ENCODE measurements at regions of chr21 and their contacts with region 1.

Region 1: DNA sequence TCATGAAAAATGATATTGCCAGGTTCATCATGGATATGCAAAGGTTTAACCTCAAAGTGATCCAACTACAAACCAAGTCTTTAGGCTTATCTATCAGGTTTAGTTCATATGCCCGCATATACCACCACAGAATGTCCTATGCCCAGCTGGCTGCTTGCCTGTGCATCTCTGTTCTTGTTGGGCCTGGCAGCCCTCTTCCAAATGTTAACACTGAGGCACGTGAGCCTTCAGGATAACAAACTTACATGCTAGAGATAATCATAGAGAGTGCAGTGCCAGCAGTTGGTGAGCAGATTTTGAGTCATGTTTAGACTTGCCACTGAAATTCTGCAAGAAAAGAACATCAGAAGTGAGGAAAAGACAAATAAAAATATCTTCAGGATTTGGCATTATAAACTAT is 607.9 kb upstream of the TMPRSS15 start:
- DNase-seq: peak in 2 of 5 donors; percentile 22 to 45
- ATAC-seq: peak; percentile 62 to 92 (median 81)
- H3K4me3 ChIP-seq: no peak overlapping the region
- H3K27ac ChIP-seq: peak overlapping the region in 2 of 12 donors; percentile 17 to 37
- H3K4me1 ChIP-seq: no peaks in the 10 kb centered on the region
- H3K27me3 ChIP-seq: no peaks in the 10 kb centered on the region
- CTCF ChIP-seq: no peak
- POLR2A ChIP-seq: no peak

Region 2: GRCh38 chr21:18970941-18971340 is 40.5 kb before region 1 on chr21:
- intact Hi-C with region 1: no loop called
- DNase-seq: no peak
- ATAC-seq: no peak
- H3K4me3 ChIP-seq: no peak overlapping the region
- H3K27ac ChIP-seq: no peak overlapping the region
- H3K4me1 ChIP-seq: no peaks in the 10 kb centered on the region
- H3K27me3 ChIP-seq: no peaks in the 10 kb centered on the region
- CTCF ChIP-seq: no peak
- POLR2A ChIP-seq: no peak

Region 3: GRCh38 chr21:18991846-18992245 is 19.6 kb before region 1 on chr21:
- intact Hi-C with region 1: no loop called
- DNase-seq: no peak
- ATAC-seq: no peak
- H3K4me3 ChIP-seq: no peak overlapping the region
- H3K27ac ChIP-seq: no peak overlapping the region
- H3K4me1 ChIP-seq: no peaks in the 10 kb centered on the region
- H3K27me3 ChIP-seq: no peaks in the 10 kb centered on the region
- CTCF ChIP-seq: no peak
- POLR2A ChIP-seq: no peak

Region 4: DNA sequence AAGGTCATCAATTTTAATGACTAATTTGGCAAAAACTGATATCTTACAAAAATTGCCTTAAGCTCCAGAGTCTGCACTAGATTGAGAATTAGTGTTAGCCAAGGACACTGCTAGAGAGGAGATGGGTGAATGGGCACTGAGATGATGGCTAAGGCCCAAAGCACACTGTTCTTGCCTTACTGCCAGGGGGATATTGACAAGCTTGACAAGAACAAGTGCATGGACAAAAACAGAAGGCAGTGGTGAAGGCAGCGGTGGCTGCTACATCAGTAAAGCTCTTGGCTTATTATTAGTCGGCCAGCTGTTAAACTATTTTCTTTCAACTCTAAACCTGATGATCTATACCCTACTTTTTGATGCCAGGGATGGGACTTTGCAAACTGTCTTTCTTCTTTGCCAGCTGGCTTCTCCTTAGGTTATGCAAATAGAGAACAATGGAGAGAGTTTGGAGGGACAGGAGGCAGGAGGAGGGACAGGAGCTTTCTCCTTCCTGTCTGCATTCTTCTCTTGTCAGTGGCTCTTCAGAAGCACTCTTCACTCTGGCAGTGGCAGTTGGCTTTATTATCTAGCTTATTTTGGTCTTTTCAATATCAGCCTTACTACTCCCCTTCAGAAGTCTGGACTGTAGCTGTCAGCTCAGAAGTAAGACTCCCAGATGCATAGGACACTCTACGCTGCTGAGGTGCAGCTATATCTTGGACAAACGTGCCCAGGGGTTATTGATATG is 245.6 kb after region 1 on chr21:
- intact Hi-C with region 1: loop called in 1 of 10 experiments (anchors 10 kb)
- DNase-seq: peak in 4 of 5 donors; percentile 40 to 73 (median 59)
- ATAC-seq: peak; percentile 96 to 99 (median 98)
- H3K4me3 ChIP-seq: no peak overlapping the region
- H3K27ac ChIP-seq: peak overlapping the region in 7 of 12 donors; percentile 42 to 69 (median 64)
- H3K4me1 ChIP-seq: peaks cover 0 to 5% (median 0%) of the 10 kb centered on the region in 12 donors
- H3K27me3 ChIP-seq: no peaks in the 10 kb centered on the region
- CTCF ChIP-seq: no peak
- POLR2A ChIP-seq: no peak